ENCODE measurements at regions of chr6 and their contacts with region 1.

Region 1: GRCh38 chr6:56101141-56101553 is 146.2 kb downstream of the COL21A1 start:
- DNase-seq: peak; percentile 88
- H3K4me3 ChIP-seq: no peak overlapping the region
- H3K27ac ChIP-seq: peak overlapping the region; percentile 66
- H3K4me1 ChIP-seq: peaks cover 44% of the 10 kb centered on the region
- H3K27me3 ChIP-seq: no peaks in the 10 kb centered on the region
- CTCF ChIP-seq: no peak

Region 2: DNA sequence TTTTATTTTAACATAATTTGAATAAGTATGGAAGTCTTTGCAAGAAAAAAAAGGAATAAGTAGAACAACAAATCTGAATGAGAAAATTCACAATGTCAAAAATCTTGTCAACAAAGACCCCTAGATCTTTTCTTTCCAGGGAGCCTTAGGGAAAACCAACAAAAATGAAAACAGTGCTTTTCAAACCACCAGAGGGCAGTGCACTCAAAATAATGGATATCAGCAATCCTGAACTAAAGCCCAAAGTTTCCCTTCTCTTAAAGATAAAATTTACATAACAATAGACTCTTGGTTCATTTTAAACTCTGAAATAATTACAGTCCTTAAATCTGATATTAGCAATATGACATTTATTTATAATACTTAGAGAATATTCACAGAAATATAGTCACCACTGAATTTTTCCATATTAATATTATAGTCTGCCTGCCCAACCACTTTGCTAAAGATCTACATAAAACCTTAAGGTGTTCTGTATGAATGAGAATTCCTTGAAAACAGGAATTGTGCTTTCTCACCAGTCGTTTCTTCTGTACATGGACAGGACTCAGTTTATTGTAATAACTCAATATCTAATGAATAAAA is 120.4 kb before region 1 on chr6:
- CTCF ChIA-PET with region 1: no interaction called
- POLR2A ChIA-PET with region 1: no interaction called
- intact Hi-C with region 1: loop called (anchors 5 kb)
- DNase-seq: peak; percentile 82
- H3K4me3 ChIP-seq: no peak overlapping the region
- H3K27ac ChIP-seq: peak overlapping the region; percentile 48
- H3K4me1 ChIP-seq: peaks cover 25% of the 10 kb centered on the region
- H3K27me3 ChIP-seq: no peaks in the 10 kb centered on the region
- CTCF ChIP-seq: peak; percentile 80

Region 3: DNA sequence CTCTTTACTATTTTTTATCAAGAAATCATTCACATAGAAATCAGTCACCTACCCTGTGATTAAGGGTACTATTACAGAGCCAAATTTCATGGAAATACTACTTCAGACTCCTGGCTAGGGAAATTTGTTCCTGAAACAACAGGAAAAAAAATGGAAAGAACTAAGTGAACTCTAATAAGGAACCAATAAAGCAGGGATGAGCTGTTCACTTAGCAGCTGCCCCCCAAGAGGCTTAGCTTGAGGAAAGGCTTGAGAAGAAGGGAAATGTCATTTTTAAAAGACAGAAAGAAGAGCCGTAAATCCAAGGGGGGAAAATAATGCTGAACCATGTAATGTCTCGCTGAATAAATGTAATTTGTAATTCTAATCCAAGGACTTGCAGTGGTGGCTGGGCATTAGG is 57.4 kb after region 1 on chr6:
- CTCF ChIA-PET with region 1: interaction called, 12 read pairs
- POLR2A ChIA-PET with region 1: no interaction called
- intact Hi-C with region 1: no loop called
- DNase-seq: peak; percentile 56
- H3K4me3 ChIP-seq: no peak overlapping the region
- H3K27ac ChIP-seq: peak overlapping the region; percentile 49
- H3K4me1 ChIP-seq: peaks cover 11% of the 10 kb centered on the region
- H3K27me3 ChIP-seq: no peaks in the 10 kb centered on the region
- CTCF ChIP-seq: no peak

Region 4: DNA sequence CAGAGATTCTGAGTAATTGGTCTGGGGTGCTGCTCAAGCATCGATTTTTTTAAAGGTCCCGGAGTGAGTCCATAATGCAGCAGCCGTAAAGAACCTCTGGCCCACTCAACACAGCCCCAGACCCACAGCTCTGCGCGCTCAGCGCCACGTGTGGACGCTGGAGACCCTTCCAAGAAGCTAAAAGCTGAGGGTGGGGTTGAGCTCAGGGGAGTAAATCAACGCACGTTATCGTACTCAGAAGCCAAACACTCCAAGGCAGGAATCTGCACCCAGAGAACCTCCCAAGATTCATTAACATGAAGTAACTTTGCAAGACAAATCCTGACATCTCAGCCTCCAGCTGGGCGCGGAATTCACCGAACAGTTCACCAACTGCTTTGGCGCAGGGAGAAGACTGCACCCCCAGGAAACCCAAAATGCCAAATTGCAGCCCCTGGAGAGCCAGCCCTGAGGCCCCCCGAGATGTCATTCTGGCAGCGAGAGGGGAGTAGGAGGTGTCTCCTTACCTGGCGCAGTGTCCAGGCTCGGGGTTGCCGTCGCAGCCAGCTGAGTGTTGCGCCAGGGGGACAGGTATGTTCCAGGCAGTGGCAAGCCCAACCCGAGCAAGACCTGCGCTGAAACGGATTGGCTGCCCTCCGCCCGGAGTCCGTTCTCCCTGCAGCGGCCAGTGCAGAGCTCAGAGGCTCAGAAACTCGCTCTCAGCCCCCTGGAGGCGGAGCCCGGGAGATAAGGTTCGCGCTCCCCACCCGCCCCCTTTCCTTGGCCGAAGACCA is 145.9 kb after region 1 on chr6 and contains the start of gene COL21A1:
- CTCF ChIA-PET with region 1: no interaction called
- POLR2A ChIA-PET with region 1: no interaction called
- intact Hi-C with region 1: no loop called
- DNase-seq: peak; percentile 79
- H3K4me3 ChIP-seq: peak within 1 kb of the TSS; percentile 69
- H3K27ac ChIP-seq: peak within 1 kb of the TSS; percentile 71
- H3K4me1 ChIP-seq: peaks cover 44% of the 10 kb centered on the region
- H3K27me3 ChIP-seq: no peaks in the 10 kb centered on the region
- CTCF ChIP-seq: peak; percentile 56
- total RNA-seq, gene COL21A1: 49.0 and 51.6 TPM in 2 replicates

Region 5: GRCh38 chr6:56259234-56260077 is 158.3 kb after region 1 on chr6:
- CTCF ChIA-PET with region 1: no interaction called
- POLR2A ChIA-PET with region 1: no interaction called
- intact Hi-C with region 1: loop called (anchors 5 kb)
- DNase-seq: peak; percentile 93
- H3K4me3 ChIP-seq: no peak overlapping the region
- H3K27ac ChIP-seq: peak overlapping the region; percentile 91
- H3K4me1 ChIP-seq: peaks cover 91% of the 10 kb centered on the region
- H3K27me3 ChIP-seq: no peaks in the 10 kb centered on the region
- CTCF ChIP-seq: no peak

Measured in A673 (cell line).